ENCODE measurements at regions of chr9 and their contacts with region 1.

Region 1: GRCh38 chr9:104991144-104991953 is 63.4 kb upstream of the ABCA1 start:
- DNase-seq: peak; percentile 90
- H3K4me3 Mint-ChIP-seq: peak overlapping the region; percentile 82
- H3K27ac Mint-ChIP-seq: peak overlapping the region; percentile 97
- H3K4me1 Mint-ChIP-seq: peaks cover 54% of the 10 kb centered on the region
- H3K27me3 Mint-ChIP-seq: peaks cover 14% of the 10 kb centered on the region

Region 2: DNA sequence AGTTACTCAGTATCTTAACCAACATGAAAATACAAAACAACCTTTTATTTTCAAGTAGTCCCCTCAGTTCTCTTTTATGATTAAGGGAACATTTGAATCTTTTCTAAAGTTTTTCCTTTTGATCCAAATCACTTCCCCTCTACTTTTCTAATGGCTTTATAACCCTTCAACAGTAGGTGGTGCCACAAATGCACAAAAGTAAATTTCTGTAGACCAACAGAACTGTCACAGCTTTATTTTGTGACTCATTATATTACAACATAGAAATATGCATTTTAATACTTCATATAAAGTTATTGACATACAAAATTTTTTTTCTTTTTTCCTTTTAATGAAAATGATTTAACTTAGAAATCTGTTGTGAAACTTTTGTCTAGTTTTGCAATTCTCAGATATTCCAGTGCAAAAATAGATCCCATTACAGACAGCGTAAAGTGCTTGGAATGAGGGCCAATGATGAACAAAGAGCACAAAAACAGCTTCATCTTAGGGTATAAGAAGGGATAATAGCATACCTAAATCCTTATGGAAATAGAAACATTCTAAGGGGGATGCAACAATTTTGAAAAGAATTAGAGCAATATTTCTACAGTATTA is 210.5 kb before region 1 on chr9:
- CTCF ChIA-PET with region 1: no interaction called
- intact Hi-C with region 1: loop called (anchors 10 kb)
- DNase-seq: no peak
- H3K4me3 Mint-ChIP-seq: no peak overlapping the region
- H3K27ac Mint-ChIP-seq: no peak overlapping the region
- H3K4me1 Mint-ChIP-seq: no peaks in the 10 kb centered on the region
- H3K27me3 Mint-ChIP-seq: no peaks in the 10 kb centered on the region

Region 3: GRCh38 chr9:104961238-104961637 is 30.1 kb before region 1 on chr9:
- CTCF ChIA-PET with region 1: interaction called, 3 read pairs
- intact Hi-C with region 1: loop called (anchors 1 kb)
- DNase-seq: peak; percentile 92
- H3K4me3 Mint-ChIP-seq: peak overlapping the region; percentile 62
- H3K27ac Mint-ChIP-seq: peak overlapping the region; percentile 96
- H3K4me1 Mint-ChIP-seq: peaks cover 39% of the 10 kb centered on the region
- H3K27me3 Mint-ChIP-seq: no peaks in the 10 kb centered on the region

Region 4: DNA sequence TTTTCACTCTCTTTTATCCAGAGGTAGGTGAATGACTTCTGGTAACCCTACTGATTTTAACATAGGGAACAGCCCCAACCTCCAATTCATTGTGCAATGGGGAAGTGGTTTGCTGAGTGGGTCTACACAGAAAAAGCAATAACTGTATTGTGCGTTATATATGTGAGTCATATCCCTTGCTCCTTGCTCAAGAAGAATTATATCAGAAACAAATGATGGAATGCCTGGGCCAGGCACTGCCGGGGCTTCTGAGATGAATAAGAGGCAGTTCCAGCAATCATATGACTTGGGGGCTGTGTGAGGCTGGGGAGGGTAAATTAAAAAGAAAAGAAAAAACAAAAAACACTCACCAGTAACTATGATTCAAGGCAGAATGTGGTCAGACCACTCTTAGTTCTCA is 15.8 kb after region 1 on chr9:
- CTCF ChIA-PET with region 1: no interaction called
- intact Hi-C with region 1: loop called (anchors 1 kb)
- DNase-seq: peak; percentile 54
- H3K4me3 Mint-ChIP-seq: no peak overlapping the region
- H3K27ac Mint-ChIP-seq: no peak overlapping the region
- H3K4me1 Mint-ChIP-seq: peaks cover 7% of the 10 kb centered on the region
- H3K27me3 Mint-ChIP-seq: no peaks in the 10 kb centered on the region

Region 5: DNA sequence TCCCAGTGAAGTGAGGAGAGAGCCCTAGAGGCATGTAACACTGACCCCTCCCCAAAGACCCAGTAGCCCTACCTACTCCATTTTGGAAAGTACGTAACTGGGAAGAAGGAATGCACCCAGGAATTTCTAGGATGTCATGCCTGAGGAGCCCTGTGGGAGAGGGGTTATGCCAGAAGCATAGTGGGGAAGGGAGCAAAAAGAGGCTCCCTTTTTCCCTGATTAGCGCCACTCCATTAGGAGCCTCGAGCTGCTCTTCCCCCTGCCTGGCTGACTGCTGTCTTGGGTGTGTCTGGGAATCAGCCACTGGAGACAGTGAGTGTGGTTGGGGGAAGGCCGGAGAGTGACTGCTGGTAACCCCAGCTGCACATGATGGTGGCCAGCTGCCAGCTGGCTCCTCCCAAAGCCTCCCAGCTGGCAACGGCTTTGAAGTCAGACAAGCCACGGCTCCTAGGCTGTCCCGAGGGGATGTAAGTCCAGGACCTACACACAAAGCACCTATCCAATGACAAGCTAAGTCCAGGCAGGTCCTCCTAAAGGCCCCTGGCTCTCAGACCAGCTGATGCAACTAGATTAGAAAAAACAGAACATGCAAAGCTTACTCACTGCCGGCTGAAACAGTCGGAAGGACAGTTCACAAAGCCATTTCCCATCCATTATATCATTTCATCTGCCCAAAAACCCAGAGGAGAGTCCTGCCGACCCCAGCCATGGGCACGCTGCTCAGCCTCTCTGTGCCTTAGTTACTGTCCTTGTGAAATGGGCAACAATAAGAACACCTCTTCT is 73.2 kb after region 1 on chr9:
- CTCF ChIA-PET with region 1: no interaction called
- intact Hi-C with region 1: loop called (anchors 1 kb)
- DNase-seq: peak; percentile 19
- H3K4me3 Mint-ChIP-seq: no peak overlapping the region
- H3K27ac Mint-ChIP-seq: no peak overlapping the region
- H3K4me1 Mint-ChIP-seq: peaks cover 24% of the 10 kb centered on the region
- H3K27me3 Mint-ChIP-seq: peaks cover 2% of the 10 kb centered on the region

Region 6: GRCh38 chr9:105157130-105157583 is 165.8 kb after region 1 on chr9:
- CTCF ChIA-PET with region 1: no interaction called
- intact Hi-C with region 1: loop called (anchors 1 kb)
- DNase-seq: peak; percentile 46
- H3K4me3 Mint-ChIP-seq: no peak overlapping the region
- H3K27ac Mint-ChIP-seq: no peak overlapping the region
- H3K4me1 Mint-ChIP-seq: peaks cover 16% of the 10 kb centered on the region
- H3K27me3 Mint-ChIP-seq: no peaks in the 10 kb centered on the region

Region 7: DNA sequence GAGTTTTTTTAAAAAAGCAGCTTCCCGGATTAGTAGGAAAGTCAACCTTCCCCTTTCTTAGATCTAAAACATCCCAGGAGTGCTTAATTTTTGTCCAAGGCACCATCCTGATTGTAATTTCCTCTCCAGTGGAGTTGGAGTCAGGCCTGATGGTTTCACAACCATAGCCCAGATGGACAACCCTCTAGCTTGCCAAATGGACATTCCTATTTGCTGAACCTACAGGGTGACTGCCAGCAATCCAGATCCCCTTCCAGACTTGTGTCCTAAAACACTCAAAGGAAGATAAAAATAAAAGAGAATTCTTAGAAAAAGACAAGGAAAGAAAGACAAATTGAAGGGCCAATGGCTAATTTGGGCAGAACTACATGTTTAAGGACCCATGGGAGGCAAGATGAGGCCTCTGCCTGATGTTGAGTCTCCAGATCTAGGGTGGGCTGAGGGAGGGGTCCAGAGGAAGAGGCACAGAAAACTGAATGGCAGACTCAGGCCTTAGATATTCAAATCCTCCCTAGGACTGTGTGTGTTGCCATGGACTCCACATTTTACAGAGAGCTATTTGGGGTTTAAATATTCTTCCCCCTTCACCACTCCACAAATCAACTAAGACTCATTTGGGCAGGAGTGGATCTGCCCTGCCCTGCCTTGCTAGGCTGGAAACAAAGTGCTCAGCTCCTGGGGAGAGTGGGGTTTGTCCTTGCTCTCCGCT is 214.6 kb after region 1 on chr9:
- CTCF ChIA-PET with region 1: no interaction called
- intact Hi-C with region 1: no loop called
- DNase-seq: no peak
- H3K4me3 Mint-ChIP-seq: no peak overlapping the region
- H3K27ac Mint-ChIP-seq: no peak overlapping the region
- H3K4me1 Mint-ChIP-seq: no peaks in the 10 kb centered on the region
- H3K27me3 Mint-ChIP-seq: no peaks in the 10 kb centered on the region

Region 8: GRCh38 chr9:105694190-105694847 is 703.0 kb after region 1 on chr9 and contains the start of gene TMEM38B:
- CTCF ChIA-PET with region 1: no interaction called
- intact Hi-C with region 1: loop called (anchors 10 kb)
- DNase-seq: peak; percentile 76
- H3K4me3 Mint-ChIP-seq: peak within 1 kb of the TSS; percentile 90
- H3K27ac Mint-ChIP-seq: peak within 1 kb of the TSS; percentile 75
- H3K4me1 Mint-ChIP-seq: peaks cover 33% of the 10 kb centered on the region
- H3K27me3 Mint-ChIP-seq: peaks cover 10% of the 10 kb centered on the region
- total RNA-seq, gene TMEM38B: 17.6 TPM

Measured in activated naive CD4-positive, alpha-beta T cell treated with anti-CD3 and anti-CD28 coated beads for 36 hours (primary cell).